GM12878 (cell line): ENCODE measurements at regions of chr1 and their contacts with region 1.

Region 1: DNA sequence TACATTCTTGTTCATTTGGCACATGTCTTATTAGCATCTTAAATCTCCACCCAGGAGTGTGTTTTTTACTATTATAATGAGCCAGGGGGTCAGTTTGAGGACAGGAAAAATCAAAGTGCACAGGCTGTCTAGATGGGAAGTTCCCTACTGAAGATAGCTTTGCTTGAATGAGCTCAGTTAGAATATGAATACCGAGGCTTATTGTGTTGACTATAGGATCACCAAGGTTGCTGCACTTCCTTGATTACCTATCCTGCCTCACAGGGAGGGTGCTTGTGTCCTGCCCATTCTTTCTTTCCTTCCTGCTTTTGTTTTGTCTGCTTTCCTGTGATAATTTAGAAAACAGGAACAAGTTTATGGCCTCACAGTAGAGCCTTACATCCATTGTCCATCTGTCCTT is 16.3 kb downstream of the PHGDH start:
- DNase-seq: no peak
- ATAC-seq: peak; percentile 77
- H3K4me3 ChIP-seq: no peak overlapping the region
- H3K27ac ChIP-seq: no peak overlapping the region
- H3K4me1 ChIP-seq: no peaks in the 10 kb centered on the region
- H3K27me3 ChIP-seq: no peaks in the 10 kb centered on the region
- CTCF ChIP-seq: no peak
- EP300 ChIP-seq: no peak
- POLR2A ChIP-seq: no peak
- RAD21 ChIP-seq: no peak

Region 2: GRCh38 chr1:119743781-119744597 is 16.0 kb after region 1 on chr1:
- CTCF ChIA-PET with region 1: interaction called, 10 read pairs
- POLR2A ChIA-PET with region 1: no interaction called
- RAD21 ChIA-PET with region 1: no interaction called
- SMC1A ChIA-PET with region 1: interaction called, 3 read pairs
- in situ Hi-C with region 1: no loop called
- intact Hi-C with region 1: no loop called
- DNase-seq: peak; percentile 3
- ATAC-seq: peak; percentile 92
- H3K4me3 ChIP-seq: no peak overlapping the region
- H3K27ac ChIP-seq: no peak overlapping the region
- H3K4me1 ChIP-seq: no peaks in the 10 kb centered on the region
- H3K27me3 ChIP-seq: no peaks in the 10 kb centered on the region; a peak in 1 of 4 replicates
- CTCF ChIP-seq: peak; percentile 77 to 95 (median 83)
- EP300 ChIP-seq: no peak
- POLR2A ChIP-seq: no peak
- RAD21 ChIP-seq: peak; percentile 74